GM13976 (cell line): ENCODE measurements at regions of chr2 and their contacts with region 1.

Region 1: DNA sequence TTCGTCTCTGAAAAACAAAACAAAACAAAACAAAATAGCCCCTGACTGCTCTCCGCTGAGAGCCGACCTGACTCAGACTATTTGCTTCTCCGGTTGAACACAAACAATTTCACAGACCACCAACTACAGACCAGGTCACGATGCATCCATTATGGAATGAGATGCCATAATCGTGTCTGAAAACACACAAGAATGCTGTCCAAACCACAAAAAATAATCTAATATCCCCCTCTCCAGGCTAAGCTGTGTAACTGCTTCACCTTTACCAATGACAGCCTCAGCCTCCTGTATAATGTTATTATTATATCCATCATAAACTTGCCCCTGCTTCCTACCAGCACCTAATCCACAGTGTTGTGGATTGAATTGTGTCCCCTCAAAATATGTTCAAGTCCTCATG is 114.7 kb downstream of the DNAH6 start:
- DNase-seq: peak; percentile 34
- CTCF ChIP-seq: peak; percentile 22

Region 2: DNA sequence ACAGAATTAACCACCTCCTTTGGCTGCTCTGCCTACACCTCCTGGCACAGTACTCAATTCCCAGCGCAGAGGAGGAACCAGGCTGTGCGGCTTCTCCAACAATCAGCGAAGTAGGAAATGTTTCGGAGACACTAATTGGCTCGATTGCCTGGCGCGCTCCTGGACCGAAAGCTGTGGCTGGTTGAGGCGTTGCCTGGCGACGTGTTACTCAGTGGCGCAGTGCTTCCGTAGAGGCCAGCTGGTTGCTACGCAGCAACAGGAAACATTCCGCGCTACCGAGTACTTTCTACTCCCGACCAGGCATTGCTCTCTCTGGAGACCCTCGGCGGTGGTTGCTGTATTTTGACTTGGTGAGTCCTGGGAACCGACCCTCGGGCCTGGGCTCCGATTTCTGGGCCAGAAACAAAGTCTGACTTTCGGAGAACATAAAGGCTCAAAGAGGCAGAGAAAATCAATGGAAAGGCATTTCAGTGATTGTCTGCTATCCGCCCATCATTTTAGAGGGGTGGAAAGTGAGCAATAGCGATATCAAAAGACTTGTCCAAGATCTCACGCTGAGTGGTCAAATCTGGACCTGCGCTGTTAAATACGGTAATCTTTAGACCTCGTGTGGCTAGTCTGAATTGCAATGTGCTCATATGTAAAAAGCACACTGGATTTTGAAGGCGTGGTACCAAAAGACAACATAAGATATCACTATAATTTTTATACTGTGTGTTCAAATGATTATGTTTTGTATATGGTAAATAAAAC is 114.6 kb before region 1 on chr2 and contains the start of gene DNAH6:
- in situ Hi-C with region 1: no loop called
- DNase-seq: peak; percentile 58
- CTCF ChIP-seq: no peak

Region 3: DNA sequence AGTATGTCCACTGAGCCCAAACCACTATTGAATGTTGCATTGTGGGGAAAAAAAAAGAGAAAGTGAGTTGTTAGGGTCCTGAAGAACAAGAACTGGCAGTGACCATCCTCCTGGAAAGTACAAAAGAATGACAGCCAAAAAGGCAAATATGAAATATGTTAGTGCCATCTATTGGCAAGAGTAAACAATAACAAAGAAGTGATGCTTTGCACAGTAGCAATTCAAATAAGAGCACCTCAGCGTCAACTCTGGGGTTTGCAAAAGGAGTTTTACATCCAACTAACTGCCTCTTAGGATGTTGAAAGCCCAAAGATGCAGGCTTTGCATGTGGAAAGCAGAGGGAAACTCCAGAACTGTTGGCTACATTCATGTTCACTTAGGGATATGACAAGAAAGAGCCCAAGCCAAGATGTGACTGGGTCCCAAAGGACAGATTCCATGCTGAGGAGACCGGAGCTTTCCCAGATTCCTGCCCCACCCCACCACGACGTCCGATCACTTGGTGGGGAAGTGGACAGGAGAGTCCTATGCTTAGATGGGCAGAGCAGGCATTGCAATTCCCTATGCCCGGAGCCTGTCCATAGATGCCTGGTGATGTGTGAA is 234.2 kb after region 1 on chr2:
- in situ Hi-C with region 1: loop called (anchors 25 kb)
- DNase-seq: peak; percentile 61
- CTCF ChIP-seq: no peak